ENCODE measurements at regions of chr5 and their contacts with region 1.

Region 1: GRCh38 chr5:78648359-78649210 is at the start of gene LHFPL2:
- DNase-seq: peak; percentile 30 to 44 (median 36)
- H3K4me3 ChIP-seq: peak within 1 kb of the TSS; percentile 50 to 68 (median 58)
- H3K4me3 Mint-ChIP-seq: peak within 1 kb of the TSS; percentile 76 to 95
- H3K27ac ChIP-seq: no peak within 1 kb of the TSS
- H3K27ac Mint-ChIP-seq: peak within 1 kb of the TSS in 3 of 7 donors; percentile 30 to 62 (median 42)
- H3K4me1 ChIP-seq: peaks cover 17 to 20% of the 10 kb centered on the region in 2 donors
- H3K4me1 Mint-ChIP-seq: peaks cover 14% of the 10 kb centered on the region
- H3K27me3 ChIP-seq: peaks cover 32 to 34% of the 10 kb centered on the region in 2 donors
- H3K27me3 Mint-ChIP-seq: peaks cover 39 to 54% (median 53%) of the 10 kb centered on the region in 3 donors
- CTCF ChIP-seq: no peak
- polyA plus RNA-seq, gene LHFPL2: 3.7 to 11.6 (median 7.3) TPM

Region 2: DNA sequence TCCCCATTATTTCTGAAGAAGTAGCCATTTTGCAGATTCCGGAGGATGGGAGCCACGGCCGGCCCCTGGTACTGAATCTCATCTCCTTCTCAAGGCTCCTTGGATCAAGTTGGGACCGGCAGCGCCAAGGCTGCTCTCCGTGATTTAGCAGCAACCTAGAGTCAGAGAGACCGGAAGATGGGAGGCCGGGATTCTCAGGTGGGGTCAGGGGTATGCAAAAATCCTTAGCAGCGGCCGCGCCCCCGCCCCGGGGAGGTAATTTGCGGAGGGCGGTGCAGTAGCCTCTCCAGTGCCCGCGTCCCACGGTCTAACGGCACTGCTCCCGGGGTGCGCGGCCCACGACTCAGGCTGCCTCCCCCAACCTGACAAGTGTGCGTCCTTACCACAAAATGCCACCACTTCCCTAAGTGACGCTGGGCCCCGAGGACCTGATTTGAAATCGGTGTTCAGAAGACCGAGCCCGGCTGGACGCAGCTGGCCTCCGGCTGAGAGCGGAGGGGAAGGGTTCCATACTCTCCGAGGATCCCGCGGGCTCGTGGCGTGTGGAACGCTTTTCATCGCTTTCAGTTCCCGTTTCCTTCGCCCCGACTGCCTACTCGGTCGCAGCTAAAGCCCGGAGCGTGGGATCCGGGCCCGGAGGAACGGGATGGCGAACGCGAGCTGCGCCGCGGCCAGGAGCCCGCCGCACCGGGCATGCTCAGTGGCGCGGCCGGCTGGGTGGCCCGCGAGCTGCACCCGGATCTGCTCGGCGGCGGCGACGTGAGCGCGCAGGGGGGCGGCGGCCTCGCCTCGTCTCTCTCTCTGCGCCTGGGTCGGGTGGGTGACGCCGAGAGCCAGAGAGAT is 288.5 kb before region 1 on chr5 and contains the start of gene SCAMP1:
- intact Hi-C with region 1: loop called in 1 of 2 experiments (anchors 10 kb)
- DNase-seq: peak; percentile 94 to 97 (median 94)
- H3K4me3 ChIP-seq: peak within 1 kb of the TSS; percentile 85 to 97 (median 92)
- H3K4me3 Mint-ChIP-seq: peak within 1 kb of the TSS; percentile 96
- H3K27ac ChIP-seq: peak within 1 kb of the TSS; percentile 77 to 96
- H3K27ac Mint-ChIP-seq: peak within 1 kb of the TSS; percentile 91 to 97 (median 96)
- H3K4me1 ChIP-seq: peaks cover 16 to 32% of the 10 kb centered on the region in 2 donors
- H3K4me1 Mint-ChIP-seq: peaks cover 42% of the 10 kb centered on the region
- H3K27me3 ChIP-seq: no peaks in the 10 kb centered on the region
- H3K27me3 Mint-ChIP-seq: peaks cover 0 to 2% (median 0%) of the 10 kb centered on the region in 3 donors
- CTCF ChIP-seq: no peak
- polyA plus RNA-seq, gene SCAMP1: 5.4 to 52.4 (median 47.8) TPM

Region 3: GRCh38 chr5:78472469-78473106 is 176.0 kb before region 1 on chr5:
- intact Hi-C with region 1: loop called in 1 of 2 experiments (anchors 5 kb)
- DNase-seq: peak in 1 of 3 donors; percentile 23
- H3K4me3 ChIP-seq: no peak overlapping the region
- H3K4me3 Mint-ChIP-seq: no peak overlapping the region
- H3K27ac ChIP-seq: no peak overlapping the region
- H3K27ac Mint-ChIP-seq: no peak overlapping the region
- H3K4me1 ChIP-seq: no peaks in the 10 kb centered on the region
- H3K4me1 Mint-ChIP-seq: peaks cover 9% of the 10 kb centered on the region
- H3K27me3 ChIP-seq: no peaks in the 10 kb centered on the region
- H3K27me3 Mint-ChIP-seq: no peaks in the 10 kb centered on the region
- CTCF ChIP-seq: peak; percentile 57

Region 4: DNA sequence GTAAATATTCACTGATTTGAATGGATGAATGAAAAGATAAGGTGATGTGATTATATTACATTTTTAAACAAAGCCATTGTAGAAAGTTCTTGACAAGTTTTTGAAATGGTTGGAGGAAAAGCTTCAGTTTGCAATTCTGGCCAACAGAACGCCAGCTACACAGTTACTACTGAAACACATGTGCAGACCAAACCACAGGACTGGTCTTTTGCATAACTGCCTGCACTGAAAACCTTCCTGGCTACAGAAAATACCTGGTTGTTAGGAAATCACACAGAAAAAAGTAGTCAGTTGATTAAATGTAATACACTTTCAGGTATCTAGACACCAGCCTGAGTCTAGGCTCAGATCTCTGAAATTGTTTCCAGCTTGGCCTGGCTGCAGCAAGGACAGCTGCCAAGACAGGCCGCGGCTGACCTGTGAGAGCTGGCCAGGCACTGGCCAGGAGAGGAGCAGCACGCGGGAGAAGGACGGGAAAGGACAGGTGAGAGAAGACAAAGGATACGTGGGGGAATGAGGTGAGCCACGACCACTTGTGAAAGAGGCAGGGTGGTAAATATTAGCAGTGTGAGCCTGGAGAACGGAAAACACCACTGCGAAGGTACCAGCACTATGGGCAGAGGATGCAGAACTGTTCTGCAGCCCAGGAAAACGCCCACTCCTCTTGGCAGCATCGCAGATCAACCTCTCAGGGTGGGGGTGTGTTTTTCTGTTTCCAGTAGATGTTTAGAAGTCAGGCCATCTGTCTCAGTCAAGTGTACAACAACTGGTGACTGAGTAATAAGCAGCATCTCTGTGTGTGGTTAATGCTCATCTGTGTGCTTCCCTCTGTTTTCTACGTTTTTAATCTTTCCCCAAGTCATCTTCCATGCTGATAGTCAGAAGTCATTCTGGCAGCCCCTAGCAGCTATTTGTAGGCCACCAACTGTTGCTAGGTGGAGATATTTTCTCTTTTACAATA is 150.7 kb before region 1 on chr5:
- intact Hi-C with region 1: loop called in 1 of 2 experiments (anchors 10 kb)
- DNase-seq: no peak
- H3K4me3 ChIP-seq: no peak overlapping the region
- H3K4me3 Mint-ChIP-seq: no peak overlapping the region
- H3K27ac ChIP-seq: no peak overlapping the region
- H3K27ac Mint-ChIP-seq: peak overlapping the region in 3 of 7 donors; percentile 10 to 72 (median 62)
- H3K4me1 ChIP-seq: peaks cover 36 to 39% of the 10 kb centered on the region in 2 donors
- H3K4me1 Mint-ChIP-seq: peaks cover 65% of the 10 kb centered on the region
- H3K27me3 ChIP-seq: no peaks in the 10 kb centered on the region
- H3K27me3 Mint-ChIP-seq: peaks cover 0 to 2% (median 0%) of the 10 kb centered on the region in 3 donors
- CTCF ChIP-seq: no peak

Region 5: DNA sequence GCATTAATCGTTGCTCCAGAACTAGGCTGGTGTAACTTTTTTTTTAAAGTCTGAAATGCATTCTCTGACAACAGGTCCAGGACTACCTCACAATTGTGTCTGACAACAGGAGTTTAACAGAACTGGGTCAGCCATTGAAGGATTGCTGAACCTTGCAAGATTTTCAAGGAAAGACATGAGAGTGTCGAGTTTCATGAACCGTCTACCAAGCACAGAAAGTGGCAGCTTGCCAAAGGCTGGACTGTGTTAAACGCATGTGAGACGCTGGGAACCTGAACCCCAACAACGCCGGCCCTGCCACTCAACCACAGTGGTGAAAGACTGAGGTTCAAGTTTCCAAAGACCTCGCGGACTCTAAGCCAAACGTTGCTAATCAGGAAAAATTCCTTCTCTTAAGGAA is 79.1 kb before region 1 on chr5:
- intact Hi-C with region 1: no loop called
- DNase-seq: no peak
- H3K4me3 ChIP-seq: no peak overlapping the region
- H3K4me3 Mint-ChIP-seq: no peak overlapping the region
- H3K27ac ChIP-seq: no peak overlapping the region
- H3K27ac Mint-ChIP-seq: no peak overlapping the region
- H3K4me1 ChIP-seq: peaks cover 16 to 20% of the 10 kb centered on the region in 2 donors
- H3K4me1 Mint-ChIP-seq: peaks cover 37% of the 10 kb centered on the region
- H3K27me3 ChIP-seq: no peaks in the 10 kb centered on the region
- H3K27me3 Mint-ChIP-seq: peaks cover 0 to 2% (median 0%) of the 10 kb centered on the region in 3 donors
- CTCF ChIP-seq: no peak

Region 6: DNA sequence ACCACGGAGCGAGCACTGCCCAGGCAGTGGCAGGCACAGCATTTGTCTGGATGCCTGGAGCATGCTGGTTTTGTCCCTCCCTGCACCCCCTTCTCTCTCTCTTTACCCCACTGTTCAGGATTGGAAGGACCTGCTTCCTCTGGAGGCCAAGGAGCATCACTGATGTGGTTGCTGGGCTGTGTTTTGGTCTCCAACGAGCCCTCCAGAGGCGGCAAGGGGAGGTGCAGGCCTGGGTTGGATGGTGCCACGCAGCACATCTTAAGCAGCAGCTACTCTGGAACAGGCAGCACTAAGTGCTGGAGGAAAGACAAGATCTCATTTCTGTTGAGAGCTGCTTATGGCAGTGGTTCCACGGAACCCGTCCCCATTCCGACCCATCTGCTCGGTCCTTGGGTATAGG is 1180.7 kb after region 1 on chr5:
- intact Hi-C with region 1: no loop called
- DNase-seq: no peak
- H3K4me3 ChIP-seq: no peak overlapping the region
- H3K4me3 Mint-ChIP-seq: no peak overlapping the region
- H3K27ac ChIP-seq: no peak overlapping the region
- H3K27ac Mint-ChIP-seq: no peak overlapping the region
- H3K4me1 ChIP-seq: no peaks in the 10 kb centered on the region
- H3K4me1 Mint-ChIP-seq: no peaks in the 10 kb centered on the region
- H3K27me3 ChIP-seq: no peaks in the 10 kb centered on the region
- H3K27me3 Mint-ChIP-seq: peaks cover 4 to 11% (median 7%) of the 10 kb centered on the region in 3 donors
- CTCF ChIP-seq: no peak

Measured in CD14-positive monocyte (primary cell).